ENCODE measurements at regions of chr2 and their contacts with region 1.

Region 1: DNA sequence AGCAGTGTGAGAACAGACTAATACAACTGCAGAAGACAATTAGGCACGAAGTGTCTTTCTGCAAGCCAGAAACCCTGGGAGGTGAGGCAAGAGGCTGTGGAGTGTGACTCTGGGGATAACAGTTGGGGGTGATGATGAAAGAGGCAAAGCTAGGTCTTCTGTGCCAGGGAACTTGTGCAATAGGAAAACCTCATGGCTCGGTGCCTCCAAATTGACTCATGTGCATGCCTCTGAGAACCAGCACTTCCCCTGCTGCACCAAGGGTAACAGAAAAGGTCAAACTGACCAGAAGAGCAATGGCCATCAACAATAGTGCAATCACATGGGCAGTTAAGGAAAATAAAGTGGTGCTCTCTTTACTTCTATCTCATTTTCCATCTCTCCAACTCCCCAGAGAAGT is 136.4 kb downstream of the SCG2 start:
- DNase-seq: peak; percentile 94
- H3K4me3 ChIP-seq: no peak overlapping the region
- H3K27ac ChIP-seq: no peak overlapping the region
- H3K4me1 ChIP-seq: peaks cover 21% of the 10 kb centered on the region
- H3K27me3 ChIP-seq: no peaks in the 10 kb centered on the region
- CTCF ChIP-seq: no peak

Region 2: DNA sequence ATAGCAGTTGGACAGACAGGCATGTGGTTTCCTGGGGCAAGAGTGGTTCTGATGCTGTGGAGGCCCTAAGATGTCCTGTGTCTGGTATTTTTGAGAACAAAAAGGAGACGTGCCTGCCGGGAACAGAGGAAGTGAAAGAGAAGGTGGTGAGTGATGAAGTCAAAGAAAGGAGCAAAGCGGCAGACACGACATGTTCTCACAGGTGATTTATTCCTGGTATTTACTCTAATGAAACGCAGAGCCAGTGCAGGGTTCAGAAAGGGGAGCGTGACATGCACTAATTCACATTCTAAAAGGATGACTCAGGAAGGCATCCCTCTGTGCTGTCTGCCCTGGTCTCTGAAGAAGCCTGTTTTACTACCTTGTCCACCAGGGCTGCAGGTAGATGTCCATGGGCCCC is 202.8 kb before region 1 on chr2:
- CTCF ChIA-PET with region 1: no interaction called
- dilution Hi-C with region 1: no loop called
- in situ Hi-C with region 1: no loop called
- intact Hi-C with region 1: loop called (anchors 5 kb)
- DNase-seq: peak; percentile 88
- H3K4me3 ChIP-seq: no peak overlapping the region
- H3K27ac ChIP-seq: peak overlapping the region; percentile 73
- H3K4me1 ChIP-seq: peaks cover 32% of the 10 kb centered on the region
- H3K27me3 ChIP-seq: no peaks in the 10 kb centered on the region
- CTCF ChIP-seq: no peak

Region 3: GRCh38 chr2:223416815-223417610 is 48.8 kb before region 1 on chr2:
- CTCF ChIA-PET with region 1: no interaction called
- dilution Hi-C with region 1: no loop called
- in situ Hi-C with region 1: no loop called
- intact Hi-C with region 1: no loop called
- DNase-seq: peak; percentile 31
- H3K4me3 ChIP-seq: no peak overlapping the region
- H3K27ac ChIP-seq: no peak overlapping the region
- H3K4me1 ChIP-seq: no peaks in the 10 kb centered on the region
- H3K27me3 ChIP-seq: no peaks in the 10 kb centered on the region
- CTCF ChIP-seq: no peak

Region 4: DNA sequence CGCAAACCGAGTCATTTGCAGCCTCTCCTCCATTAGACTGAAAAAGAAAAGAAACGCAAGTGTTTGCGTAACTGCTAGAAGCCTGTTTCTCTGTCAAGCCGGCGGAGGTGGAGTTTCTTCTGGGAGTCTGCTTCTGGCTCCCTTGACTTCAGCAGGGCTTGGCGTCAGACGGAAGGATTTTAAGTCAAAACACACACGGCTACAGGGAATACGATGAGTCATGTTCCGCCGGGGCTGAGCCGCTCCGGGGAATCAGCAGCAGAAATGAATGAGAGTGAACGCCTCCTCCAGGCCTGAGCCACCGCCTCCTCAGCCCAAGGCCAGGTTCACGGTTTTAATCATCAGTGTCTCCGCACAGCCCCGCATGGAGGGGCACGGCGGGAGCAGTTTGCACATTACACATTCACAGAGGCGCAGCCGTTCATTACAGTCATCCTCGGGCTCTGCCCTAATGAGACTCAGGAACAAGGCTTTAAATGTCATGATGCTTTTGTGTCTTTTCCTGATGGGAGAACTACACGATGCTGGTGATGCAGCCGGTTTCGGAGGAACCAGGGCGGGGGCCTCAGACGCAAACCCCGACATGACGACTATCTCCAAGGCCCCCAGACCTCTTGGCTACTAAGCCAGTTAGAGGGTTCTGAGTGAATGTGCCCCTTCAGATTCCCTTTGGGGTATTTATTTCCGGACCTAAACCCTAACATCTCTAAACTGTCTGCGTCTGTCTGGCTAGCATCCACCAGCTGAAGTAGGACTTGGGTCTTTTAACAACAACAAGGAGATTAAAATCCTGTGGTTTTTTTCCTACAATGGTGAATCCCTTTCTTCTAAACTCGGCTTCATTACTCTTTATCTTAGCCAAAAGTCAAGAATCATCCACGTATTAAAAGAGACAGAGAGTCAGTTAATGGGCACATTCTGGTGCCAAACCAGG is 147.5 kb after region 1 on chr2:
- CTCF ChIA-PET with region 1: no interaction called
- dilution Hi-C with region 1: no loop called
- in situ Hi-C with region 1: no loop called
- intact Hi-C with region 1: loop called (anchors 2 kb)
- DNase-seq: peak; percentile 96
- H3K4me3 ChIP-seq: peak overlapping the region; percentile 25 to 41 (median 27)
- H3K27ac ChIP-seq: peak overlapping the region; percentile 41
- H3K4me1 ChIP-seq: peaks cover 5% of the 10 kb centered on the region
- H3K27me3 ChIP-seq: no peaks in the 10 kb centered on the region
- CTCF ChIP-seq: peak in 1 of 2 donors; percentile 14

Region 5: GRCh38 chr2:223669453-223670225 is 203.8 kb after region 1 on chr2:
- CTCF ChIA-PET with region 1: no interaction called
- dilution Hi-C with region 1: no loop called
- in situ Hi-C with region 1: no loop called
- intact Hi-C with region 1: loop called (anchors 10 kb)
- DNase-seq: peak; percentile 35
- H3K4me3 ChIP-seq: no peak overlapping the region
- H3K27ac ChIP-seq: no peak overlapping the region
- H3K4me1 ChIP-seq: no peaks in the 10 kb centered on the region
- H3K27me3 ChIP-seq: no peaks in the 10 kb centered on the region
- CTCF ChIP-seq: no peak

Region 6: DNA sequence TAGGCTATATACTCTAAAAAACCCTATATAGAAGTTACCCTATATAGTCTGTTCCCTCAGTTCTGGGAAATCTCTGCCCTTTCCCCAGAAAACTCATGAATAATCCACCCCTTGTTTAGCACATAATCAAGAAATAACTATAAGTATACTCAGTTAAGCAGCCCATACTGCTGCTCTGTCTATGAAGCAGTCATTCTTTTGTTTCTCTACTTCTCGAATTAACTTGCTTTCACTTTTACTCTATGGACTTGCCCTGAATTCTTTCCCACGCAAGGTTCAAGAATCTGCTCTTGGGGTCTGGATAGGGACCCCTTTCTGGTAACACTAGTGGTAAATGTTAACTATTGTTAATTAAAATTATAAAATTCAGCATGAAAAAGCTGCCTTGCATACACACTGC is 388.9 kb after region 1 on chr2:
- CTCF ChIA-PET with region 1: no interaction called
- dilution Hi-C with region 1: loop called (anchors 25 kb)
- in situ Hi-C with region 1: no loop called
- intact Hi-C with region 1: loop called (anchors 10 kb)
- DNase-seq: no peak
- H3K4me3 ChIP-seq: no peak overlapping the region
- H3K27ac ChIP-seq: no peak overlapping the region
- H3K4me1 ChIP-seq: peaks cover 7% of the 10 kb centered on the region
- H3K27me3 ChIP-seq: no peaks in the 10 kb centered on the region
- CTCF ChIP-seq: no peak

Measured in mammary epithelial cell (primary cell).